ENCODE measurements at regions of chr7 and their contacts with region 1.

Region 1: DNA sequence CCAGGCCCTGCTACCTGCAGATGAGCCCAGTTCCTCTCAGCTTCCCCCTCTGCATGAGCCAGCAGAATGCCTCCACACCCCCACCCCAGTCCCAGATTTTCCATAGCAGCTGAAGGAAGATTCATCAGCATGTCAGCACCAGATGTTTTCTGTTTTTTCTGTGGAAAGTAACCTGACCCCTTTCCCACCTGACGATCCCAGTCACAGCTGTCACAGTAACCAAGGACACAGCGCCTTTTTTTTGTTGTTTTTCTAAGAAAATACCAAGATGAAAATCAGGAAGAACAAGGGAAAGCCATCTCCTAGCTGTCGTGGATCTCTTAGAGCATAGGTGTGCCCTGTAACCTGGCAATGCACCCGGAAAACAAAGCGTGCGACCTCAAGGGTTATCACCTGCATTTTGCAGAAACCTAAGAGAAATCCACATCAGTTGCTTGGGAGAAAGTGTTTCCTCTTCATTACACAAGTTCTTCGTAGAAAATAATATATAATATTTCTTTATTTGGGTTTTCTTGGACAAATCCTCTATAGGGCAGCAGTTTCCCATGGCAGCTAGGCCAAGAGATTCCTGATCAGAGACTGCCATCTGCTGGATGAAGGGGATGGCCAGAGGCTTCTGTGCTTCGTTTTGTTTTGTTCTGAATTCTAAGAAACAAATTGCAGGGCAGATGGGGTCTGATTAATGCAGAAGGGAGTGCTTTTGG is 401.9 kb downstream of the TNS3 start:
- DNase-seq: peak; percentile 36
- ATAC-seq: peak; percentile 92
- H3K4me3 ChIP-seq: no peak overlapping the region
- H3K27ac ChIP-seq: no peak overlapping the region
- H3K4me1 ChIP-seq: no peaks in the 10 kb centered on the region
- H3K27me3 ChIP-seq: peaks cover 12% of the 10 kb centered on the region
- CTCF ChIP-seq: peak; percentile 91

Region 2: GRCh38 chr7:45890902-45891461 is 1289.0 kb before region 1 on chr7:
- CTCF ChIA-PET with region 1: no interaction called
- POLR2A ChIA-PET with region 1: no interaction called
- in situ Hi-C with region 1: no loop called
- intact Hi-C with region 1: loop called (anchors 1 kb)
- DNase-seq: no peak
- ATAC-seq: no peak
- H3K4me3 ChIP-seq: no peak overlapping the region
- H3K27ac ChIP-seq: no peak overlapping the region
- H3K4me1 ChIP-seq: no peaks in the 10 kb centered on the region; the same call in 1 of the 2 replicates
- H3K27me3 ChIP-seq: peaks cover 37% of the 10 kb centered on the region
- CTCF ChIP-seq: peak; percentile 81; the same call in 1 of the 2 replicates

Region 3: GRCh38 chr7:45917658-45918057 is 1262.3 kb before region 1 on chr7:
- CTCF ChIA-PET with region 1: interaction called, 5 read pairs
- POLR2A ChIA-PET with region 1: no interaction called
- in situ Hi-C with region 1: no loop called
- intact Hi-C with region 1: loop called (anchors 2 kb)
- DNase-seq: no peak
- ATAC-seq: peak; percentile 79
- H3K4me3 ChIP-seq: peak overlapping the region in 1 of 2 experiments; percentile 29; a peak in 2 of 4 replicates
- H3K27ac ChIP-seq: no peak overlapping the region
- H3K4me1 ChIP-seq: peaks cover 6% of the 10 kb centered on the region; the same call in 1 of the 2 replicates
- H3K27me3 ChIP-seq: peaks cover 19% of the 10 kb centered on the region
- CTCF ChIP-seq: peak; percentile 99

Region 4: GRCh38 chr7:46352004-46352954 is 827.7 kb before region 1 on chr7:
- CTCF ChIA-PET with region 1: no interaction called
- POLR2A ChIA-PET with region 1: no interaction called
- in situ Hi-C with region 1: no loop called
- intact Hi-C with region 1: loop called (anchors 1 kb)
- DNase-seq: peak; percentile 43
- ATAC-seq: peak; percentile 93
- H3K4me3 ChIP-seq: no peak overlapping the region
- H3K27ac ChIP-seq: no peak overlapping the region
- H3K4me1 ChIP-seq: no peaks in the 10 kb centered on the region
- H3K27me3 ChIP-seq: no peaks in the 10 kb centered on the region
- CTCF ChIP-seq: peak; percentile 75